ENCODE measurements at regions of chr2 and their contacts with region 1.

Region 1: DNA sequence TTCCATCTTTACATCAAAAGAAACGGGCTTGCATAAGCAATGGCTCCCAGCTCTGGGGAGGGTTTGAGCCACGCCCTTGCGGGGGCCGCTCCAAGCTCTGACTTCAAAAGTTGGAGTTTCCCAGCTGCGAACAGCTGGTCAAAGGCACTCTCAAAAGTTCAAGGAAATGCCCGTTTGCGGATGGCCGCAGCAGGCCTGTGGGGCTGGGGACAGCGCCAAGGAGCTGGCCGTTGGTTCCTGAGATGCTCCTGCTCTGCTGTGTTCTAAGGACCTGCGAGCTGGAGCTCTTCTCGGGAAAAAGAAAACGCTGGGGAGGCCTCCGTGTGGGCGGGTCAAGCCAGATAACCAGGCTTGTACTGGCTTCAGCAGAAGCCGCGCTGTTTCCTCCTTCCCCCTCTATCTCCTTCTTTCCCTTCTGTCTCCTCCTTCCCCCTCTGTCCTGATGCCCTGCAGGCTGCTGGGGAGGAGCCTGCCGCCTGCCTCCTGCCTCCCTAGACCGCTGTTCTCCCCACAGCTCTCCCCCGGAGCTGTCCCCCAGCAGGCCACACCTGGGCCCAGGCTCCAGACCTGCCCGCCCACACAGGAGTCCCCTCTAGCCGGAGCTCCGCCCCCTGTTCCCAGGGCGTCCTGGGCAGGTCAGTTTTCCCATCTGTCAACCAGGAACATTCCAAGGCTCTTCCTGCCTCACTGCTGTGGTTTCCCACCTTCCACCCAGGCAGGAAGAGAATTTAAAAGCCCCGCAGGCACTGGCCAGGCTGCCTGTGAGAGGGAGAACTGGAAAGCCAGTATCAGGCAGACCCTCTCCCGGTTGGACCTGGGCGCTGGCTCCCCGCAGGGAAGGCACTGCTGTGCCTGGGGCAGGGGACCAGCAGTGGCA is 14.1 kb downstream of the KLF11 start:
- DNase-seq: peak; percentile 83 to 90 (median 90)
- ATAC-seq: peak; percentile 58 to 65
- H3K4me3 ChIP-seq: no peak overlapping the region
- H3K27ac ChIP-seq: peak overlapping the region; percentile 60
- H3K4me1 ChIP-seq: no peaks in the 10 kb centered on the region
- H3K27me3 ChIP-seq: no peaks in the 10 kb centered on the region

Region 2: DNA sequence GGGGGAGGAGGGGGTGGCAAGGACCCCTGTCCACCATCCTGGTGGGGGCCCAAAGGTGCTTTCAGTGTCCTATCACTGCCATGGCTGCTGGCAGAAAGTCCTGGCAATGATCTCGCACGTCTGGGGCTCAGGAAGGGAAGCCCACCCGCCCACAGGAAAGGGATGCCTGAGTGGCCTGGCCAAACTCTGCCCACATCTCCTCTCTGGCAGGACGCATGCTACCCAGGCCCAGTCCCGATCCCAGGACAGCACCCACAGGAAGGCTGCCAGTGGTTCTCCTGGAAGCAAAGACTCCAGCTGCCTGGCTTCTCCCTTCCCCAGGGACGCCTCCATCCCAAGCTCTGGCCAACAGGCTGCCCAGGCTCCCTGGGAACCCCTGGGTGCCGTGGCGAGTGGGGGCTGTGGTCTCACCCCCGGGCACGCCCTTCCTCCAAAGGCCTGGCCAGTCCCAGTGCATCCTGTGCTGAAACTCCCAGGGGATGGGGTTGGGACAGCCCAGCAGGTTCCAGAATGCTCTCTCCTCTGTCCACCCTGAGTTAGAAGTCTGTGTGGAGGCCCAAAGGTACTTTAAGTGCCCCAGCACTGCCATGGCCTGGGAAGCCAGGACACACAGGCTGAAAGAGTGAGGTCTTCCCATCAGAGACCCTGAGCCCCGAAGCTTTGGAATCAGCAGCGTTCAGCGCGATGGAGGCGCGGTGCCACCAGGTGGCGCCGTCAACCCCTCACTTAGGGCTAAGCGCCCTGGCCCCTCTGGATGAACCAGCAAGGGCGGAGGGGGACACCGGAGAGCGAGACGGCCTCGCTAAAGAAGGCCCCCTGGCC is 243.9 kb before region 1 on chr2:
- intact Hi-C with region 1: loop called in 1 of 4 experiments (anchors 10 kb)
- DNase-seq: peak; percentile 74 to 91 (median 91)
- ATAC-seq: peak; percentile 80 to 88
- H3K4me3 ChIP-seq: no peak overlapping the region
- H3K27ac ChIP-seq: no peak overlapping the region
- H3K4me1 ChIP-seq: no peaks in the 10 kb centered on the region
- H3K27me3 ChIP-seq: no peaks in the 10 kb centered on the region

Region 3: GRCh38 chr2:9984217-9984739 is 73.2 kb before region 1 on chr2:
- intact Hi-C with region 1: loop called in 1 of 4 experiments (anchors 10 kb)
- DNase-seq: no peak
- ATAC-seq: peak; percentile 48 to 60
- H3K4me3 ChIP-seq: no peak overlapping the region
- H3K27ac ChIP-seq: no peak overlapping the region
- H3K4me1 ChIP-seq: no peaks in the 10 kb centered on the region
- H3K27me3 ChIP-seq: no peaks in the 10 kb centered on the region